Esophagus squamous epithelium (tissue), 5 donors: ENCODE measurements at regions of chr1 and their contacts with region 1.

Region 1: GRCh38 chr1:156383023-156383422 is 14.0 kb downstream of the RHBG start:
- DNase-seq: no peak
- H3K4me3 ChIP-seq: no peak overlapping the region
- H3K27ac ChIP-seq: no peak overlapping the region
- H3K4me1 ChIP-seq: peaks cover 0 to 1% (median 0%) of the 10 kb centered on the region in 3 donors
- H3K27me3 ChIP-seq: peaks cover 0 to 23% (median 1%) of the 10 kb centered on the region in 4 donors
- CTCF ChIP-seq: peak; percentile 57 to 78 (median 70)
- POLR2A ChIP-seq: no peak

Region 2: DNA sequence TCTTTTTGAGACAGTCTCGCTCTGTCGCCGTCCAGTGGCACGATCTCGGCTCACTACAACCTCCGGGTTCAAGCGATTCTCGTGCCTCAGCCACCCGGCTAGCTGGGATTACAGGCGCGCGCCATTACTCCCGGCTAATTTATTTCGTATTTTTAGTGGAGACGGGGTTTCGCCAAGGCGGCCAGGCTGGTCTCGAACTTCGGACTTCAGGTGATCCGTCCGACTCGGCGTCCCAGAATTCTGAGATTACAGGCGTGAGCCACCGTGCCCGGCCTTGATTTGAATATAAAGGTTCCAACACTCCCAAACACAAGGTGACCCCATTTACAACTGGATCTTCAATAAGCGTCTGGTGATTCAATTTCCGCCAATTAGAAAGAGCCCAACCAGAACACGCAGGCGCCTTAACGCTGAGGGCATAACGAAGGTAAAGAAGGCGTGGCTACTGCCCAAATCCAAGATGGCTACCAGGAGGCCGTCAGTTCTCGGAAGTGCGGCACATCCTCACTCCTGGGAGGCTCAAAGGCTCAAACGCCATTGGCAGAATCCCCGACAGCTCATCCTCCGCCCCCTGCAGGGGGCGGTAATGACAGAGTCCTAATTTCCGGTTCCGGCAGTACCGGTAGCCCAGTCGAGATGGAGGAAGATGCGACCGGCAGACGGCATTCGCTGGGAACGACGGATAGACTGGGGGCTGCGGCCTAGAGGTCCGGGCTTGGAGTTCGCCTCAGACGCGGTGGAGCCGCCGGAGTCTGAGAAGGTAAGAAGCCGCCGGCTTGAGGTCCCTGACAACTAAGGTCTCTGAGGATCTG is 189.3 kb before region 1 on chr1 and contains the start of gene SLC25A44:
- intact Hi-C with region 1: no loop called
- DNase-seq: peak; percentile 79
- H3K4me3 ChIP-seq: peak within 1 kb of the TSS; percentile 71 to 90 (median 84)
- H3K27ac ChIP-seq: peak within 1 kb of the TSS; percentile 80 to 89 (median 85)
- H3K4me1 ChIP-seq: peaks cover 11 to 42% (median 13%) of the 10 kb centered on the region in 3 donors
- H3K27me3 ChIP-seq: no peaks in the 10 kb centered on the region
- CTCF ChIP-seq: peak; percentile 34 to 80 (median 71)
- POLR2A ChIP-seq: peak in 3 of 4 donors; percentile 29 to 50 (median 49)
- total RNA-seq, gene SLC25A44: 10.5 to 17.7 (median 15.7) TPM

Region 3: GRCh38 chr1:156445789-156446263 is 62.8 kb after region 1 on chr1:
- intact Hi-C with region 1: loop called (anchors 2 kb)
- DNase-seq: no peak
- H3K4me3 ChIP-seq: no peak overlapping the region
- H3K27ac ChIP-seq: no peak overlapping the region
- H3K4me1 ChIP-seq: peaks cover 0 to 7% (median 0%) of the 10 kb centered on the region in 3 donors
- H3K27me3 ChIP-seq: peaks cover 0 to 61% (median 10%) of the 10 kb centered on the region in 4 donors
- CTCF ChIP-seq: peak; percentile 85 to 96 (median 95)
- POLR2A ChIP-seq: no peak

Region 4: GRCh38 chr1:156618853-156619581 is 236.0 kb after region 1 on chr1 and contains the start of gene HAPLN2:
- intact Hi-C with region 1: loop called (anchors 10 kb)
- DNase-seq: no peak
- H3K4me3 ChIP-seq: no peak within 1 kb of the TSS
- H3K27ac ChIP-seq: no peak within 1 kb of the TSS
- H3K4me1 ChIP-seq: peaks cover 4 to 20% (median 5%) of the 10 kb centered on the region in 3 donors
- H3K27me3 ChIP-seq: peaks cover 4 to 88% (median 8%) of the 10 kb centered on the region in 4 donors
- CTCF ChIP-seq: peak in 3 of 6 experiments; percentile 12 to 27 (median 17)
- POLR2A ChIP-seq: no peak
- total RNA-seq, gene HAPLN2: 0.18 TPM in 1 of 4 donors, not detected in the others